ENCODE measurements at regions of chr3 and their contacts with region 1.

Region 1: DNA sequence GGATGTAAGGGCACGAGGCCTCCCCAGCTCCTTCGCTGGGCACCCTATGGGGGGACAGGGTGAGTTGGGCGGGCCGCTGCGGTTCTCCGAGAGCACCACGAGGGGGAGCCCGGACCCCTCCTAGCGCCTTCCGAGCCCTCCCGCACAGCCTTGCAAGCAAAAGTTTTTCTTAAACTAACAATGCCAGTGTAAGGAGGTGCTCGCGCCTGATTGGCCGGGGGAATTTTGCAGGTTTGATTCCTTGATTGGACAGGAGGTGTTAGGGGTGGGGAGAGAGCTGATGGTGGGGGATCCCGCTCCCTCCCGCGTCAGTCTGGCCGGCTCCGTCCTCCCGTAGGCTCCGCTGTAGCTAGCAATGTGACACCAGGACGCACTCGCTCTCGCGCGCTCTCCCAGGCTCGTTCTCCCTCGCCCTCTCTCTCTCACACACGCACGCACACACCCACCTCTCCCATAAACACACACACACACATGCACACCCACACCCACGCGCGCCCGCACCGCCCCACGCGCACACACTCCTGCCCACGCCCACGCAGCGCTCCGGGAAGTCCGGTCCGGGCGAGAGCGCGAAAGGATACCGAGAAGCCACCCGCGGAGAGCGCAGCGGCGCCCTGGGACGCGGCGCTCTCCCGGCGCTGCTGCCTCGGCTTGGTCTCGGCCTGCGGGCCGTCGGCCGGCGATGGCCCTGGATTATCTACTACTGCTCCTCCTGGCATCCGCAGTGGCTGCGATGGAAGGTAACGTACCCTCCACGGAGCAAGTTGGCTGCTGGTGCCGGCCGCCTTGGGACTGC is at the start of gene EPHB1:
- DNase-seq: peak; percentile 63
- H3K4me3 ChIP-seq: peak within 1 kb of the TSS; percentile 57
- H3K27ac ChIP-seq: no peak within 1 kb of the TSS
- H3K27me3 ChIP-seq: peaks cover 57% of the 10 kb centered on the region
- CTCF ChIP-seq: peak; percentile 91
- polyA plus RNA-seq, gene EPHB1: 0.07 and 0.11 TPM in 2 replicates

Region 2: DNA sequence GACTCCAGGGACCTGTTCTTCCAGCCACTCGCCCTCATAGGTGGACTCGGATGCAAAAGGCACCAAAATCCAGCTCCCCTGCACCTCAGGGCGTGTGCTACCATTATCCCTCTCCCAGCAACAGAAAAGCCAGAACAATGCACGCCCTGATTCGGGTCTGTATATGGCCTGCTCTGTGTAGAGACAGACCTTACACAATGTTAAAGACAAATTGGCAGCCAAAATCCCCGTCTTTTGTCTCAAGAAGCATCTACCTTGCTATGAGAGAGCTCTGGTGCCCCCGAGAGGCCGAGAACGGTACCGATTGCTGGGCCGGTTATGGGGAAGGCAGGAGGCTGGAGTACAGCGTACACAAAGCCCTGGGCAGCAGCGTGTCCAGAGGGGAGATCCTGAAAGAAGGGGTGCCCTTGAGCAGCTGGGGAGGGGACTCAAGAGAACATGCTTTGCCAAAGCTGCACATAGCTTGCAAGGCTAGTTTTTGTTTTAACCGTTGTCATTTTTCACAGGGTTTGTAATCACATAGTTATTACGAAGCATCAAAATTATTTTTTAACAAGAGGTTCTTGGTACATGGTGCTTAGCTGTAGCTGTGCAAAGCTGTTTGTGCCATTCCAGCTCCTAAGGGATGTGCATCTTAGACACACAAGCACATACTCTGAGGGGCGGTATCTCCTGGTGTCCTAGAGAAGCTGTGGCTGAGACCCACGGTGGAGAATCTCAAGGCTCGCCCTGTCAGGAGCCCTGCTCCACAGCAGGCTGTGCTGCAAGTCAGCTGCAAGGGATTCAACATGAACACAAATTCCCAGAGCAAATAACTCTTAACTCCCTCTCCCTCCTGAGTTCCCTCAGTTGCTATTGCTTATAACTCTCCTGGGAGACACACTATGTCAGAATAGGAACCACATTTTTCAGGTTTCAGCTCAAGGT is 708.9 kb after region 1 on chr3:
- CTCF ChIA-PET with region 1: interaction called, 24 read pairs
- POLR2A ChIA-PET with region 1: no interaction called
- DNase-seq: peak; percentile 23
- H3K4me3 ChIP-seq: no peak overlapping the region; the same call in 1 of the 2 replicates
- H3K27ac ChIP-seq: no peak overlapping the region
- H3K27me3 ChIP-seq: peaks cover 15% of the 10 kb centered on the region
- CTCF ChIP-seq: peak; percentile 77

Measured in AG04450 (cell line).